ENCODE measurements at regions of chr11 and their contacts with region 1.

Region 1: GRCh38 chr11:118145285-118146227 is 7.1 kb downstream of the SCN4B start:
- DNase-seq: no peak
- H3K4me3 ChIP-seq: peak overlapping the region; percentile 58
- CTCF ChIP-seq: peak; percentile 80

Region 2: DNA sequence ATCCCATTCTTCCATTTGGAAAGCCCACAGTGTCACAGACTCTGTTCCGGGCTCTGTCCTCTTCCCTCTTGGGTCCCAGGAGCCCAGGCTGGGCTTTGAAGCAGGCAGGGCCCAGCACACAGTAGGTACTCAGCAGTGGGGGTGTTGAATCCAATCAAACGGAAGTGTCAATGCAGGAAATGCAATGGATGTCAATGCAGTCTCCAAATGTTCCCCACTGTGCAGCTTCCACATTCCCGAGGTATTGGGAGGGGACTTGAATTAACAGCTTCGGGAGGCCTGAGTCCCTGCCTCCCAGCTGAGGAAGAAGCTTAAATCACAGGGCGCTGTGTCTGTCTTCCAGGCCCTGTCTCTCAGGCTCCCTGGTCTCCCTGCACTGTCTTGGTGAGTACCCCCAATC is 37.0 kb before region 1 on chr11:
- CTCF ChIA-PET with region 1: no interaction called
- POLR2A ChIA-PET with region 1: no interaction called
- DNase-seq: no peak
- H3K4me3 ChIP-seq: no peak overlapping the region
- CTCF ChIP-seq: no peak

Region 3: DNA sequence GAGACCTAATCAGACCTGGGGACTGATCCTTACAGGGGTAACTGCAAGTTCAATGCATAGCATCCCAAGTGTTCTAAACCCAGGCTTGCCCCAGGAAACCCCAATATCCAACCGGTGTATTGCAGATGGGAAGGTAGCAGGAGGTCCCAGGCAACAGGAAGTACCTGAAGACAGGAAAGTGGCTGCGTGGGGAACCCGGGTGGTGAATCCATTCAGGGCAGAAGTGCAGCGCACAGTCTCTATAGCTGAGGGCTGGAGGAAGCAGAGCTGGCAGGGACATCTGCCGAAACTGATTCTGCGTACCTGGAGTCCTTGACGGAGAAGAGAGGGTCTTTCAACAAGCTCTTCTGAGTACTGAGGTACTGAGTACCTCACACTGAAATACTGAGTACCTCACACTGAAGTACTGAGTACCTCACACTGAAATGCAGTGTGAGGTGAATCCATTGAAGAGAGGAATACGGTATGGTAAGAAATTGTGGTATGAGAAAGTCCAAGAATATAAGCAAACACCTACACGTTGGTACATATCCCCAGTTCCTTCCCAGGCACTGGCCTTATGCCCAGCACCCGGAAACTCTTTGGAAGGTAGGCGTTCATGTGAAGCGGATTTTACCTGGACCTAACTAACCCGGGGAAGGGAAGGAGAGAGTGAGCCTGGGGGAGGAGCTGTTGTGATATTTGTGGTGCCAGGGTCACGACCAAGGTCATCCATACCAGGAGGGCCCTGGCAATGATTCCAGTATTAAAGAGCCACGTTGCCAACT is 13.0 kb before region 1 on chr11:
- CTCF ChIA-PET with region 1: interaction called, 14 read pairs
- POLR2A ChIA-PET with region 1: no interaction called
- DNase-seq: no peak
- H3K4me3 ChIP-seq: no peak overlapping the region
- CTCF ChIP-seq: no peak

Region 4: DNA sequence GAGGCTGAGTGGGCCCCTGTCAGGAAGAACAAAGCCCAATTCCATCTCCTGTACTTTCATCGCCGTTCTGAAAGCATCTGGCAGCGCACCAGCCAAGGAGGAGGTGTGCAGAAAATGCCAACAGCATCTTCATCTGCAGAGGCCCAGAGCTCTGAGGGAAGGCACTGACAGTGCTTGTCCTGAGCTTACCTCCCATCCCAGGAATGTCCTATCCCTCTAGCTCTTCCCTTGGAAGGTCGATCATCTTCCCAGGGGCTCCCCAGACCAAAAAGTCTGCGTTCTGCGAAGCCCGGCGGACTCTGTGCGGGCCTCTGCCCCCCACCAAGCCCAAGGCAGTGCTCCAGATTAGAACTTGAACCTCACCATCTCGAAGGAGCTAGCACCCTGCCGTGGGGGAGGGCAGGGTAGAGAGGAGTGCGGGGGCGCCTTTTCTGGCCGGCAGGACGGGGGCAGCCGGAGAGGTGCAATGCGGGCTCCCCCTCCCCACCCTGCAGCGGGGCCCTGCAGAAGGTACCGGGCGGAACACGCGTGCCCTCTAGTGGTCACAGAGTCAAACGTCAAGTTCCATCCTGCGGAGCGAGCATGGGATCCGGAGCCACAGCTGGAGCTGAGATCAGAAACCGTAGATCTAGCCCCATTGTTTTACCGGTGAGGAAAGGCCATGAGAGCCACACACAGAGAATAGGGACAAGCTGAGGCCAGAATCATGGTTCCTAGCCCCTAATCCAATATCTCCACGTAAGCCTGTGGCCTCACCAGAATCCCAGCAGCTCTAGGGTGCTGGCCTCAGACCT is 25.9 kb after region 1 on chr11:
- CTCF ChIA-PET with region 1: interaction called, 63 read pairs
- POLR2A ChIA-PET with region 1: no interaction called
- DNase-seq: no peak
- H3K4me3 ChIP-seq: no peak overlapping the region
- CTCF ChIP-seq: peak; percentile 89

Region 5: GRCh38 chr11:118184784-118185579 is 39.4 kb after region 1 on chr11:
- CTCF ChIA-PET with region 1: no interaction called
- POLR2A ChIA-PET with region 1: no interaction called
- DNase-seq: no peak
- H3K4me3 ChIP-seq: no peak overlapping the region
- CTCF ChIP-seq: no peak

Region 6: DNA sequence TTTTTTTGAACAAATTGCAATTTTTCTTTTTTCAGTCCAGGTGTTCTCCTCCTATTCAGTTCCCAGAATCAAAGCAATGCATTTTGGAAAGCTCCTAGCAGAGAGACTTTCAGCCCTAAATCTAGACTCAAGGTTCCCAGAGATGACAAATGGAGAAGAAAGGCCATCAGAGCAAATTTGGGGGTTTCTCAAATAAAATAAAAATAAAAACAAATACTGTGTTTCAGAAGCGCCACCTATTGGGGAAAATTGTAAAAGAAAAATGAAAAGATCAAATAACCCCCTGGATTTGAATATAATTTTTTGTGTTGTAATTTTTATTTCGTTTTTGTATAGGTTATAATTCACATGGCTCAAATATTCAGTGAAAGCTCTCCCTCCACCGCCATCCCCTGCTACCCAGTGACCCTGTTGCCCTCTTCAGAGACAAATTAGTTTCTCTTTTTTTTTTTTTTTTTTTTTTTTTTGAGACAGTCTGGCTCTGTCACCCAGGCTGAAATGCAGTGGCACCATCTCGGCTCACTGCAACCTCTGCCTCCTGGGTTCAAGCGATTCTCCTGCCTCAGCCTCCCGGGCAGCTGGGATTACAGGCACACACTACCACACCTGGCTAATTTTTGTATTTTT is 207.6 kb after region 1 on chr11:
- CTCF ChIA-PET with region 1: interaction called, 38 read pairs
- POLR2A ChIA-PET with region 1: no interaction called
- DNase-seq: no peak
- H3K4me3 ChIP-seq: no peak overlapping the region
- CTCF ChIP-seq: no peak

Measured in AG04449 (cell line).